Head of caudate nucleus (tissue), 42 donors: ENCODE measurements at regions of chr1 and their contacts with region 1.

Region 1: GRCh38 chr1:248714248-248714647 is 11.7 kb upstream of the OR14I1 start:
- DNase-seq: no peak

Region 2: GRCh38 chr1:248421384-248421783 is 292.9 kb before region 1 on chr1:
- intact Hi-C with region 1: no loop called
- DNase-seq: no peak

Region 3: GRCh38 chr1:248521859-248522258 is 192.4 kb before region 1 on chr1:
- intact Hi-C with region 1: no loop called
- DNase-seq: no peak

Region 4: GRCh38 chr1:248585266-248585665 is 129.0 kb before region 1 on chr1:
- intact Hi-C with region 1: no loop called
- DNase-seq: no peak

Region 5: DNA sequence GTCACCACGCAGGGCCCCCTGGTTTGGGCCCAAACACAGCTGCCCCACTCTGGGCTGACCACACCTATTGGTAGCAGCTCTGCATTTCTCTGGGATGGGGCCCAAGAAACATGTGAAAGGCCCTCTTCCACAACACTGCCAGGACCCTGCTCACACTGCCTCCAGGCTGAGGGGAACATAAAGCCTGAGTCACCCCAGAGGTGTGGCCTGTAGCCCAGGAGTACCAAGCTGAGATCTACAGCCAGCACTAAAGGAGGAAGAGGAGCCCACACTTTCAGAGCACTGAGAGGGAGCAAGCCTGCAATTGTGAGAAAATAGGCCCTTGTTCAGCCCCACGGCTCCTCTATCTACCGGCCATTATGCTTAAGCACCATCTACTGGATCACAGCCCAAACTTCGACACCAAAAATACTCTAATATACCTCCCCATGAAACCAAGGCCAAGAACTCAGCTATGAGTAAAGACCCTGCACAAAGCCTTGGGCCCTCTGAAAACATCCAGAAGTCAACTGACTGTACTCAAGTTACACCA is 102.3 kb before region 1 on chr1:
- intact Hi-C with region 1: no loop called
- DNase-seq: no peak

Region 6: GRCh38 chr1:248670003-248670402 is 44.2 kb before region 1 on chr1:
- intact Hi-C with region 1: loop called (anchors 5 kb)
- DNase-seq: no peak